Endothelial cell of umbilical vein (primary cell): ENCODE measurements at regions of chr2 and their contacts with region 1.

Region 1: DNA sequence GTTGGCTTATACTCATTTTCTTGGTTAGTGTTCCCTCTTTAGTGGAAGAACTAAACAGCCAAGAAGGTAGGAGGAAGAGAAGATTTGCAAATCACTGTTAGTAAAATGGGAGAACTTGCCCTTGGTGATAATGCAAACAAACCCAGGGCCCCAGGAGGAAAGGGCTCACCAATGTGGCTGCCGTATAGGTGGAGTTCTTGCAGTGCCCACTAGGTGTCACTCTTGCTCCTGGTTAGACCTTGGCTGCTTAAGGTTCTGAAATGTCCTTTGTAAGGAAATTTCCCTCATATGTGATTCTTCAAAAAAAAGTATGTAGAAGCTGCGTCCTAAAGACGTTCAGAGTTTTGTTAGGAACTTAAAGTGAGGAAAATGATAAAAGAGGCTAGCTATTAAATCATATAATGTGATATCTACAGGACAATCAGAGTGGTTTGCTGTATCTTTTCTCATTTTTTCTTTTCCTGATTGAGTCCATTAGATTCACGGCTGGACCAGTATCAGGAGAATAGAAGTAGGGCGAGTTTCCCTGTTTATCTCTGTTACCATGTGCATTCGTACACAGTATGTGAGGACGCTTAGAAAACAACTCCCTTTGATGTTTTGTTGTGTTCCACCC is 48.6 kb downstream of the RPIA start:
- DNase-seq: peak; percentile 82
- H3K4me3 ChIP-seq: no peak overlapping the region
- H3K27ac ChIP-seq: peak overlapping the region; percentile 16
- H3K4me1 ChIP-seq: peaks cover 31% of the 10 kb centered on the region
- H3K27me3 ChIP-seq: no peaks in the 10 kb centered on the region
- CTCF ChIP-seq: peak; percentile 85 to 87
- POLR2A ChIP-seq: no peak

Region 2: GRCh38 chr2:88530081-88530480 is 210.0 kb before region 1 on chr2:
- CTCF ChIA-PET with region 1: no interaction called
- POLR2A ChIA-PET with region 1: no interaction called
- dilution Hi-C with region 1: no loop called
- intact Hi-C with region 1: no loop called
- DNase-seq: no peak
- H3K4me3 ChIP-seq: no peak overlapping the region
- H3K27ac ChIP-seq: no peak overlapping the region
- H3K4me1 ChIP-seq: no peaks in the 10 kb centered on the region
- H3K27me3 ChIP-seq: no peaks in the 10 kb centered on the region
- CTCF ChIP-seq: no peak
- POLR2A ChIP-seq: no peak

Region 3: GRCh38 chr2:88600038-88600465 is 140.0 kb before region 1 on chr2:
- CTCF ChIA-PET with region 1: interaction called, 3 read pairs
- POLR2A ChIA-PET with region 1: interaction called, 3 read pairs
- dilution Hi-C with region 1: no loop called
- intact Hi-C with region 1: loop called (anchors 1 kb)
- DNase-seq: peak; percentile 99
- H3K4me3 ChIP-seq: no peak overlapping the region
- H3K27ac ChIP-seq: peak overlapping the region; percentile 84
- H3K4me1 ChIP-seq: peaks cover 35% of the 10 kb centered on the region
- H3K27me3 ChIP-seq: no peaks in the 10 kb centered on the region
- CTCF ChIP-seq: no peak
- POLR2A ChIP-seq: no peak

Region 4: DNA sequence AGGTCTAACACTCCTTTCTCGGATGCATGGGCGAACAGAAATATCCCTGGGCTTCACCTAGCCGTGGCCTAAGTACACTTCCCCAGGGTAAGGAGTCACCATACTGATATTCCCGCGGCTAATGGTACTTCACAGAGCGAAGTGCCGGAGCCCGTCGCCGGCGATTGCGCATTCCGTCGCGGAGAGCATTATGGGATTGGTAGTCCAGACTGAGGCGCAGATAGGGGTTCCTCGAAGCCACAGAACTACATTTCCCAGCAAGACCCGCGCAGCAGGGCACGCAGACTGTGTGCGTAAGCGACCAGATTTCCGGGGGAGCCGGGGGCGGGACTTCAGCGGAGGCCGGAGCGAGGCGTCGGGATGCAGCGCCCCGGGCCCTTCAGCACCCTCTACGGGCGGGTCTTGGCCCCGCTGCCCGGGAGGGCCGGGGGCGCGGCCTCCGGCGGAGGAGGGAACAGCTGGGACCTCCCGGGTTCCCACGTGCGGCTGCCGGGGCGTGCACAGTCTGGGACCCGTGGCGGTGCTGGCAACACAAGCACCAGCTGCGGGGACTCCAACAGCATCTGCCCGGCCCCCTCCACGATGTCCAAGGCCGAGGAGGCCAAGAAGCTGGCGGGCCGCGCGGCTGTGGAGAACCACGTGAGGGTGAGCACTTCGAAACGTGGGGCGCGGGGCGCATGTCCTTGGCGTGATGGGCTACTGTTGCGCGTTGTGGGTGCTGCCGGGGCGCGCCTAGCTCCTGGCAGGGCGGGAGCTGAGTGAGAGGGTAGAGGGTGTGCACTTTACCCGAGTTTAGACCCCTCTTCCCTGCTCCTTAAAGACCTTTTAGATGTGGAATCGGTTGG is 48.5 kb before region 1 on chr2 and contains the start of gene RPIA:
- CTCF ChIA-PET with region 1: interaction called, 11 read pairs
- POLR2A ChIA-PET with region 1: interaction called, 4 read pairs
- dilution Hi-C with region 1: no loop called
- intact Hi-C with region 1: loop called (anchors 1 kb)
- DNase-seq: peak; percentile 99
- H3K4me3 ChIP-seq: peak within 1 kb of the TSS; percentile 44 to 83 (median 73)
- H3K27ac ChIP-seq: peak within 1 kb of the TSS; percentile 59
- H3K4me1 ChIP-seq: peaks cover 13% of the 10 kb centered on the region
- H3K27me3 ChIP-seq: no peaks in the 10 kb centered on the region
- CTCF ChIP-seq: peak; percentile 71 to 76
- POLR2A ChIP-seq: peak; percentile 61
- total RNA-seq, gene RPIA: 29.8 and 30.3 TPM in 2 replicates

Region 5: DNA sequence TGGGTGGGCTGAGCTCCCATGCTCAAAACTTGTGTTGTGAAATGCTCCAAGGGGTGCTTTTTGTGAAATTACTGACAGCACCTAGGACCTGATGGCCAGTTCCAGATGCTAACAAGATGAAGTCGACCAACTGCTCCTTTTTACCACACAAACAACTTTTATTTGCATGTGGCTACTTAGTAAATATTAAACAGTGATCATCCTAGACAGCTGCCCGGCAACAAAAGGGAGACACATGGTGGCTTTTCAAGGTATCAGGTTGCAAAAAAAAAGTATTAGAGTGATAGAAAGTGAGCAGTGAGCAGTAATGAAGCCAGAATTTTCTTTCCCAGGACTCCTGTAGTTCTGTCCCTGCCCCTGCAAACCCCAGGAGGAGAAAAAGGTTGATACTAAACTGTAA is 69.9 kb after region 1 on chr2:
- CTCF ChIA-PET with region 1: interaction called, 6 read pairs
- POLR2A ChIA-PET with region 1: no interaction called
- dilution Hi-C with region 1: no loop called
- intact Hi-C with region 1: loop called (anchors 5 kb)
- DNase-seq: no peak
- H3K4me3 ChIP-seq: no peak overlapping the region
- H3K27ac ChIP-seq: no peak overlapping the region
- H3K4me1 ChIP-seq: peaks cover 3% of the 10 kb centered on the region
- H3K27me3 ChIP-seq: peaks cover 0 to 9% of the 10 kb centered on the region in 2 experiments
- CTCF ChIP-seq: no peak
- POLR2A ChIP-seq: no peak

Region 6: DNA sequence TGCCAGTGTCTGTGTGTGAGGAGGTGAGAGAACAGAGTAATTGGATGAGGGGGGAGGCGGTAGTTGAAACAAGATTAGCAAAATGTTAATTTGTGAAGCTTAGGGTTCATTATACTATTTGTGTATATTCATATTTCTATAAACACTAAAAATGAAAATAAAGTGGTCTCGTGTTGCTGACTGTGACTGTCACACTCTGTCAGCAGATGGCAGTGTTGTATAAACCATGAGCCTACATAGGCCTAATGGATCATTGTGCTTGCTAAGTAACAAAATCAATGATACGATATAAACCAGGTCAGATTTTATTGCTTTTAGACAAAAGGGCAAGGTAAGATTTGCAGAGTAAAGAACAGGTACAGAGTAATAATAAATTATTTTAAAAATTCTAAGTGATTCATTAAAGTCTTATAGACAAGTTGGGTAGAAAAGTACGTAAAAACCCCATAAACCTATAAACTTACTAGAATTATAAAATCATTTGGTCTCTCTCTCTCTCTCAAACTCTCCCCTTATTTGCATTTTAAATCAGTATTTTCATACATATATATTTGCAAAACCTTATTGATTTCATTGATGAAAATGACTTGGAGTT is 134.1 kb after region 1 on chr2:
- CTCF ChIA-PET with region 1: interaction called, 9 read pairs
- POLR2A ChIA-PET with region 1: no interaction called
- dilution Hi-C with region 1: no loop called
- intact Hi-C with region 1: loop called (anchors 5 kb)
- DNase-seq: peak; percentile 77
- H3K4me3 ChIP-seq: peak overlapping the region in 1 of 3 experiments; percentile 45
- H3K27ac ChIP-seq: no peak overlapping the region
- H3K4me1 ChIP-seq: no peaks in the 10 kb centered on the region
- H3K27me3 ChIP-seq: peaks cover 10 to 32% of the 10 kb centered on the region in 2 experiments
- CTCF ChIP-seq: peak; percentile 57 to 62
- POLR2A ChIP-seq: no peak

Region 7: GRCh38 chr2:88919087-88919738 is 179.1 kb after region 1 on chr2:
- CTCF ChIA-PET with region 1: interaction called, 10 read pairs
- POLR2A ChIA-PET with region 1: no interaction called
- dilution Hi-C with region 1: no loop called
- intact Hi-C with region 1: loop called (anchors 1 kb)
- DNase-seq: peak; percentile 29
- H3K4me3 ChIP-seq: no peak overlapping the region
- H3K27ac ChIP-seq: no peak overlapping the region
- H3K4me1 ChIP-seq: no peaks in the 10 kb centered on the region
- H3K27me3 ChIP-seq: peaks cover 5 to 13% of the 10 kb centered on the region in 2 experiments
- CTCF ChIP-seq: peak; percentile 46 to 49
- POLR2A ChIP-seq: no peak

Region 8: DNA sequence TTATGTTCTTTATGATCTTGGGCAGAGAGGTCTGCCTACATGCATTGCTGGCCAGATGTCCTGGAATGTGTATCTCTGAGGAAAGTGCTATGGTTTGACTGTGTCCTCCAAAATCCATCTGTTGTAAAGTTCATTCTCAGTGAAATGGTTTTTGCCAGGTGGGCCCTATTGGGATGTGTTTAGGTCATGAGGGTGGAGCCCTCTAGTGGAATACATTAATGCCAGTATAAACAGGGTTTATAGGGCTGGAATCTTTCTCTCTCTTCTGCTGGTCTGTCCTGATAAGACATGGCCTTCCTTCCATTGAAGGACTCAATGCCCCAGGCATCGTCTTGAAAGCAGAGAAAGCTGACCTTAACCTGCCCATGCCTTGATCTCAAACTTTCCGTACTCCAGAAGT is 209.9 kb after region 1 on chr2:
- CTCF ChIA-PET with region 1: interaction called, 6 read pairs
- POLR2A ChIA-PET with region 1: no interaction called
- dilution Hi-C with region 1: no loop called
- intact Hi-C with region 1: loop called (anchors 10 kb)
- DNase-seq: peak; percentile 24
- H3K4me3 ChIP-seq: no peak overlapping the region
- H3K27ac ChIP-seq: no peak overlapping the region
- H3K4me1 ChIP-seq: no peaks in the 10 kb centered on the region
- H3K27me3 ChIP-seq: peaks cover 0 to 2% of the 10 kb centered on the region in 2 experiments
- CTCF ChIP-seq: peak; percentile 29 to 50
- POLR2A ChIP-seq: no peak